Activated naive CD4-positive, alpha-beta T cell treated with anti-CD3 and anti-CD28 coated beads for 36 hours (primary cell): ENCODE measurements at regions of chr2 and their contacts with region 1.

Region 1: GRCh38 chr2:8544786-8545694 is 136.8 kb upstream of the ID2 start:
- DNase-seq: peak; percentile 97
- H3K4me3 Mint-ChIP-seq: peak overlapping the region; percentile 10
- H3K27ac Mint-ChIP-seq: peak overlapping the region; percentile 97
- H3K4me1 Mint-ChIP-seq: peaks cover 67% of the 10 kb centered on the region
- H3K27me3 Mint-ChIP-seq: no peaks in the 10 kb centered on the region

Region 2: GRCh38 chr2:7758073-7758759 is 786.8 kb before region 1 on chr2:
- CTCF ChIA-PET with region 1: no interaction called
- intact Hi-C with region 1: loop called (anchors 10 kb)
- DNase-seq: no peak
- H3K4me3 Mint-ChIP-seq: no peak overlapping the region
- H3K27ac Mint-ChIP-seq: no peak overlapping the region
- H3K4me1 Mint-ChIP-seq: peaks cover 12% of the 10 kb centered on the region
- H3K27me3 Mint-ChIP-seq: peaks cover 12% of the 10 kb centered on the region

Region 3: DNA sequence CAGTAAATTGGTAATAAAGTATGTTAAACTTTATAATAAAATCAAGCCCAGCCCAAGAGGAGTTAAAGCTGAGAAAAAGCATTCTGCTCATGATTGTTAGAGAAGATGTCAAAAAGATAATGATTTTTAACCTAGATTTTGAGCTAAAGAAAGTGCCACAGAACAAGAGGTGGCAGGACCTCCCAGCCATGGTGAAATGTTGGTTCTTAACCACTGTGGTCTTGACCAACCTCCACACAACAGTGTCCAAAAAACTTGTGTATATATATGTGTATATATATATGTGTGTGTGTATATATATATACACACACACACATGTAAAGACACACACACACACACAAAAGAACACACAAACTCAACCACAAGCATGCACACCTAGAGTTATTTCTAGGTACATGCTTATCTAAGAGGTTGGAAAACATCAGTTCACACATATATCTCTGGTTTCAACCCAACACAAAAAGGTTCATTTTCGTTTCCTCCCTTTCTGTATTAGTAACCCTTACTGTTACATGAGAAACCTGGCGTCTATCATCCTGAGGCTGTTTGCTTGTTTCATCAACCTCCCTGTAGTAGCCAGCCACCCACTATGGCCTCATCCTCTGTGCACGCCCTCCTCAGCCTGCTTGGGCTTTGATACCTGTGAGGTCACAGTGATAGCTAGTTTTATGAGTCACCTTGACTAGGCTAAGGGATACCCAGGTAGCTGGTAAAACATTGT is 495.0 kb before region 1 on chr2:
- CTCF ChIA-PET with region 1: no interaction called
- intact Hi-C with region 1: loop called (anchors 2 kb)
- DNase-seq: peak; percentile 80
- H3K4me3 Mint-ChIP-seq: no peak overlapping the region
- H3K27ac Mint-ChIP-seq: peak overlapping the region; percentile 68
- H3K4me1 Mint-ChIP-seq: peaks cover 18% of the 10 kb centered on the region
- H3K27me3 Mint-ChIP-seq: peaks cover 2% of the 10 kb centered on the region

Region 4: GRCh38 chr2:8408560-8409460 is 136.2 kb before region 1 on chr2:
- CTCF ChIA-PET with region 1: interaction called, 3 read pairs
- intact Hi-C with region 1: loop called (anchors 1 kb)
- DNase-seq: peak; percentile 83
- H3K4me3 Mint-ChIP-seq: no peak overlapping the region
- H3K27ac Mint-ChIP-seq: peak overlapping the region; percentile 64
- H3K4me1 Mint-ChIP-seq: peaks cover 26% of the 10 kb centered on the region
- H3K27me3 Mint-ChIP-seq: peaks cover 13% of the 10 kb centered on the region

Region 5: DNA sequence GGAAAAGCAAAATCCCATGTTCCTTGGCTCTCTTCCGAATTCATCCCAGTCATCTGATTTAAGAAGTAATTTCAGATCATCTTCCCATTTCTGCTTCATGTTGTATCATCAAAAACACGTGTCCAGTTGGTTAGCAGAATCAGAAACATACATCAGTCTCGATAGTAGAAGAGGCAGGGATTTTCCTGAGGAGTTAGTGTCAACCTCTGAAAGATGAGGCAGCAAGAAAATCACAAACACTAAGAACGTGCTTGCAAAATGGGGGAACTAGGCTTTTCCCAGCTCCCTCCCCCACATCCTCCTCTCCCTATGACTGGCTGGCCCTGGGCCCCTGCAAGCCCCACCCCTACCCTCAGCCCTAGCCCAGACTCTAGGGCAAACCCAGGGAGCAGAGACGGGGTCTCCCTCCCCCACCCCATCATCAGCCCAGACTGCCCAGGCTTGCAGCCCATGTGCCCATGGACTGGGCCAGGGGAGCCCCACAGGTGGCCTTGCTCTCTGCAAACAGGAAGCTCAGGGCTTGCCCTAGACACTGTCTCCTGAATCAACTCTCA is 24.2 kb before region 1 on chr2:
- CTCF ChIA-PET with region 1: interaction called, 23 read pairs
- intact Hi-C with region 1: loop called (anchors 1 kb)
- DNase-seq: peak; percentile 72
- H3K4me3 Mint-ChIP-seq: no peak overlapping the region
- H3K27ac Mint-ChIP-seq: peak overlapping the region; percentile 54
- H3K4me1 Mint-ChIP-seq: peaks cover 45% of the 10 kb centered on the region
- H3K27me3 Mint-ChIP-seq: no peaks in the 10 kb centered on the region

Region 6: GRCh38 chr2:8534729-8535468 is 10.1 kb before region 1 on chr2:
- CTCF ChIA-PET with region 1: no interaction called
- intact Hi-C with region 1: no loop called
- DNase-seq: no peak
- H3K4me3 Mint-ChIP-seq: no peak overlapping the region
- H3K27ac Mint-ChIP-seq: no peak overlapping the region
- H3K4me1 Mint-ChIP-seq: peaks cover 21% of the 10 kb centered on the region
- H3K27me3 Mint-ChIP-seq: no peaks in the 10 kb centered on the region

Region 7: GRCh38 chr2:8803658-8804379 is 258.8 kb after region 1 on chr2:
- CTCF ChIA-PET with region 1: no interaction called
- intact Hi-C with region 1: loop called (anchors 10 kb)
- DNase-seq: peak; percentile 78
- H3K4me3 Mint-ChIP-seq: no peak overlapping the region
- H3K27ac Mint-ChIP-seq: peak overlapping the region; percentile 75
- H3K4me1 Mint-ChIP-seq: peaks cover 19% of the 10 kb centered on the region
- H3K27me3 Mint-ChIP-seq: no peaks in the 10 kb centered on the region